SK-N-SH (cell line): ENCODE measurements at regions of chr17 and their contacts with region 1.

Region 1: DNA sequence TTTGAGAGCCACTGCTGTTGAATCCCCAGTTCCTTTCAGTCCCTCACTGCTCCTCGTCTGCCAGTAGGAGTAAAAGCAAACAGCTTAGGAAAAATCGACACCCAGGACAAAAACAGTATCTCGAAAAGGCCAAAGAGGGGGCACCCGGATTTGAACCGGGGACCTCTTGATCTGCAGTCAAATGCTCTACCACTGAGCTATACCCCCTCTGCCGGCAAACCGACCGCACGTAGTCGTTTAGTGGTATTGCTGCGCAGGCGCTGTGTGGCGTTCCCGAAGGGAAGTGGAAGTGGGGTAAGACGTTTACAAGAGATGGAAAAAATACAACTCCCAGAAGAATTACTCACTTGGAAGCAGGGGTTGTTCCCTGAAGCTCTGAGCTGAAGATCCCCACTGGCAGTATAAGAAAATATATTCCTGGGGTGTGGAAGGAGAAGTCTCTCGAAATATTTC is 2.2 kb upstream of the PLXDC1 start:
- DNase-seq: peak; percentile 68
- H3K4me3 ChIP-seq: peak overlapping the region; percentile 83 to 89
- H3K27ac ChIP-seq: peak overlapping the region; percentile 58 to 59
- H3K4me1 ChIP-seq: peaks cover 0 to 20% of the 10 kb centered on the region in 2 experiments; a peak in 1 of 4 replicates
- H3K27me3 ChIP-seq: peaks cover 13% of the 10 kb centered on the region; the same call in 1 of the 2 replicates
- CTCF ChIP-seq: no peak; the same call in 1 of the 2 replicates
- EP300 ChIP-seq: peak in 1 of 2 experiments; percentile 54; a peak in 1 of 4 replicates
- RAD21 ChIP-seq: no peak

Region 2: GRCh38 chr17:38922538-38923297 is 230.9 kb before region 1 on chr17:
- CTCF ChIA-PET with region 1: interaction called, 22 read pairs
- POLR2A ChIA-PET with region 1: interaction called, 3 read pairs
- DNase-seq: peak; percentile 52
- H3K4me3 ChIP-seq: no peak overlapping the region
- H3K27ac ChIP-seq: peak overlapping the region; percentile 49 to 67; a peak in 3 of 4 replicates
- H3K4me1 ChIP-seq: peaks cover 9 to 27% of the 10 kb centered on the region in 2 experiments; a peak in 2 of 4 replicates
- H3K27me3 ChIP-seq: no peaks in the 10 kb centered on the region
- CTCF ChIP-seq: no peak
- EP300 ChIP-seq: no peak; a peak in 1 of 4 replicates
- RAD21 ChIP-seq: no peak

Region 3: GRCh38 chr17:39018267-39019134 is 135.1 kb before region 1 on chr17:
- CTCF ChIA-PET with region 1: interaction called, 11 read pairs
- POLR2A ChIA-PET with region 1: no interaction called
- DNase-seq: no peak
- H3K4me3 ChIP-seq: no peak overlapping the region
- H3K27ac ChIP-seq: no peak overlapping the region
- H3K4me1 ChIP-seq: no peaks in the 10 kb centered on the region
- H3K27me3 ChIP-seq: no peaks in the 10 kb centered on the region
- CTCF ChIP-seq: no peak
- EP300 ChIP-seq: no peak
- RAD21 ChIP-seq: no peak

Region 4: DNA sequence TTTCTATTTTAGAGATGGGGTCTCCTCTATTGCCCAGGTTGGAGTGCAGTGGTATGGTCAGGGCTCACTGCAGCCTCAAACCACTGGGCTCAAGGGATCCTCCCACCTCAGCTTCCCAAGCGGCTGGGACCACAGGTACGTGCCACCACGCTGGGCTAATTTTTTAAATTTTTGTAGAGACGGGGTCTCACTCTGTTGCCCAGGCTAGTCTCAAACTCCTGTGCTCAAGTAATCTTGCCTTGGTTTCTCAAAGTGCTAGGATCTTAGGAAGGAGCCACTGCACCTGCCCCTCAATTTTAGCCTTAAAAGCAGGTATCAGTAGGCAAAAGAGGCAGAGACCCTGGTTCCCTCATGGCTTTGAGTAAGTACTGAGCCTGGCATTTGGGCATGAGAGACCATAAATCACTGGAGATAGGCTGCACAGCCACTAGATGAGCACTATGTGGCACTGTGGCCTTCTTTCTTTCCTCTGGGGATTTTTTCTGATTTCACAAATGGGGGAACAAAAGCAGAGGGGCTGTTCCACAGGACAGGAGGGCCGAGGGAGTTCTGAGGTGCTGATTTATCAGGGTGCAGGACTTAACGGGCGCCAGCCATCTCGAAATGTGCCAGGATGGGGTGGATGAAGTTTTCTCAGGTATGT is 84.4 kb before region 1 on chr17:
- CTCF ChIA-PET with region 1: interaction called, 27 read pairs
- POLR2A ChIA-PET with region 1: no interaction called
- DNase-seq: peak; percentile 69
- H3K4me3 ChIP-seq: no peak overlapping the region
- H3K27ac ChIP-seq: no peak overlapping the region
- H3K4me1 ChIP-seq: no peaks in the 10 kb centered on the region; a peak in 1 of 4 replicates
- H3K27me3 ChIP-seq: no peaks in the 10 kb centered on the region
- CTCF ChIP-seq: peak; percentile 68
- EP300 ChIP-seq: no peak
- RAD21 ChIP-seq: peak; percentile 76

Region 5: GRCh38 chr17:39084558-39084957 is 69.1 kb before region 1 on chr17:
- CTCF ChIA-PET with region 1: interaction called, 20 read pairs
- POLR2A ChIA-PET with region 1: no interaction called
- DNase-seq: peak; percentile 51
- H3K4me3 ChIP-seq: no peak overlapping the region
- H3K27ac ChIP-seq: no peak overlapping the region
- H3K4me1 ChIP-seq: peaks cover 0 to 15% of the 10 kb centered on the region in 2 experiments; a peak in 1 of 4 replicates
- H3K27me3 ChIP-seq: no peaks in the 10 kb centered on the region
- CTCF ChIP-seq: no peak
- EP300 ChIP-seq: no peak
- RAD21 ChIP-seq: no peak

Region 6: GRCh38 chr17:39132192-39132610 is 21.4 kb before region 1 on chr17:
- CTCF ChIA-PET with region 1: no interaction called
- POLR2A ChIA-PET with region 1: no interaction called
- DNase-seq: no peak
- H3K4me3 ChIP-seq: no peak overlapping the region
- H3K27ac ChIP-seq: no peak overlapping the region
- H3K4me1 ChIP-seq: no peaks in the 10 kb centered on the region
- H3K27me3 ChIP-seq: no peaks in the 10 kb centered on the region
- CTCF ChIP-seq: no peak
- EP300 ChIP-seq: no peak
- RAD21 ChIP-seq: no peak

Region 7: GRCh38 chr17:39164675-39165143 is 11.1 kb after region 1 on chr17:
- CTCF ChIA-PET with region 1: interaction called, 38 read pairs
- POLR2A ChIA-PET with region 1: interaction called, 3 read pairs
- DNase-seq: peak; percentile 98
- H3K4me3 ChIP-seq: peak overlapping the region; percentile 50 to 62
- H3K27ac ChIP-seq: no peak overlapping the region
- H3K4me1 ChIP-seq: peaks cover 0 to 3% of the 10 kb centered on the region in 2 experiments; a peak in 2 of 4 replicates
- H3K27me3 ChIP-seq: no peaks in the 10 kb centered on the region
- CTCF ChIP-seq: peak; percentile 78
- EP300 ChIP-seq: no peak
- RAD21 ChIP-seq: peak; percentile 35; the same call in 1 of the 2 replicates

Region 8: DNA sequence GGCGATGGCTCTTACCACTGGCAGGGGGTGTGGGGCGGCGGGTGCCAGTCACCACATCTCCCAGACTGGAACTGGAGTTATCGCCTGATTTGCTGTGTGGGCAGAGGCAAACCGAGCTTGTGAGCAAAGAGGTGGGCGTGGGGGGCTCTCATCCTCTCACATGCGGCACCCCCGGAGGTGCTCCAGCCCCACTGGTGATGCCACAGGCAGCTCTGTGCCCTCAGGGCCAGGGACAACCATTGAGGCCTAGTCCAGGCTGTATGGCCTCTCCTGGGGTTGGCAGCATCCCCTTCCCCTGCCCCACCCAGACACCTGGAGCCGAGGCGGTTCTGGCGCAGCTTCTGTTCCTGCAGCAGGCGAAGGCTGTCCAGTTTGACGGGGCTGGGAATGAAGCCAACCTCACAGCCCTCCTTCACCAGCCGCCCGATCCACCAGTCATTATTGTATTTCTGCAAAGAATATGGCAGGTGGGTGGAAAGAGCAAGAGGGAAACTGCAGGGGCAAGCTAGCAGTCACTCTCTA is 32.9 kb after region 1 on chr17:
- CTCF ChIA-PET with region 1: no interaction called
- POLR2A ChIA-PET with region 1: no interaction called
- DNase-seq: no peak
- H3K4me3 ChIP-seq: no peak overlapping the region
- H3K27ac ChIP-seq: no peak overlapping the region
- H3K4me1 ChIP-seq: no peaks in the 10 kb centered on the region
- H3K27me3 ChIP-seq: no peaks in the 10 kb centered on the region
- CTCF ChIP-seq: no peak
- EP300 ChIP-seq: no peak
- RAD21 ChIP-seq: no peak

Region 9: DNA sequence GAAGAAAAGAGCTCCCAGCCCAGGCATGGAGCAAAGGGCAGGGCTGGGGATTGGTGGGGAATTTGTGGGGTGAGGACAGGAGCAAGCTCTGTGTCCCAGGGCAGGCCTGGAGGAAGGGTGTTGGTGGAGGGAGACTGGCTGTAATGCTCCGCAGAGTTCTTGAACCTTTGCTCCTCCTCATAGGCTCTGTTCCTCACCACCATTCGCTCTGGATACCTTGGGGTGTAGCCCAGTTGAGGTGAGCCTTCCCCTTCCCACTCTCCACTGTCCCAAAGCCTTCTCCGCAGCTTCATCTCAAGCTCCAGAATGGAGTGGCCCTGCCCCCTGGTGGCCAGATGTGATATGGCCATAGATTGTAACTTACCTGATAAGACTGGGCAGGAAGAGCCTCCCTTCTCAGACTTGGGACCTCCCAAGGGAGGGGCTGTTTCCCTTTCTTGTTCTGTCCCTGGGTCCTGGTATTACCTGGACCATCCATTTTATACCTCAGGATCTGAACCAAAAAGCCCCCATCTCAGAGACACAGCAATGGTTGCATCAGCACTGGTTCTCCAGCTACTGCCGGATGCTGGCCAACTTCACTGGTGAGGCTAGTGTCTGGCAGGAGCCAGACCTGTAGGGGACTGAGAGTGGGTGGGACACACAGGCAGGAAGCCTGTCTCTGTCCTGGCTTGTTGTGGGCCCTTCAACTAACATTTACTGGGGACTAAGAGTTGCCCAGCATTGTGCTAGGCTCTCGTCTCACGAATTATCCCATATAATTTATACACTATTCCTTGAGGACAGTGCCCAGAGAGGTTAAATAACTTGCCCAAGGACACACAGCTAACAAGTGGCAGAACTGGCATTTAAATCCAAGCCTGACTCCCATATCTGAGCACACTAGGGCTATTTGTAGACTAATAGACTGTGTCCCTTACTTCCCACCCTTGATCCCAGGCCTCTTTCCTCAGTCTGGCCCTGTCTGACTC is 91.3 kb after region 1 on chr17:
- CTCF ChIA-PET with region 1: interaction called, 28 read pairs
- POLR2A ChIA-PET with region 1: no interaction called
- DNase-seq: peak; percentile 80
- H3K4me3 ChIP-seq: no peak overlapping the region; a peak in 1 of 4 replicates
- H3K27ac ChIP-seq: no peak overlapping the region
- H3K4me1 ChIP-seq: peaks cover 0 to 2% of the 10 kb centered on the region in 2 experiments; a peak in 1 of 4 replicates
- H3K27me3 ChIP-seq: no peaks in the 10 kb centered on the region
- CTCF ChIP-seq: peak; percentile 94
- EP300 ChIP-seq: no peak
- RAD21 ChIP-seq: peak; percentile 94

Region 10: GRCh38 chr17:39294060-39294459 is 140.4 kb after region 1 on chr17:
- CTCF ChIA-PET with region 1: no interaction called
- POLR2A ChIA-PET with region 1: no interaction called
- DNase-seq: no peak
- H3K4me3 ChIP-seq: no peak overlapping the region
- H3K27ac ChIP-seq: no peak overlapping the region
- H3K4me1 ChIP-seq: no peaks in the 10 kb centered on the region
- H3K27me3 ChIP-seq: no peaks in the 10 kb centered on the region
- CTCF ChIP-seq: no peak
- EP300 ChIP-seq: no peak
- RAD21 ChIP-seq: no peak